ENCODE measurements at regions of chr16 and their contacts with region 1.

Region 1: DNA sequence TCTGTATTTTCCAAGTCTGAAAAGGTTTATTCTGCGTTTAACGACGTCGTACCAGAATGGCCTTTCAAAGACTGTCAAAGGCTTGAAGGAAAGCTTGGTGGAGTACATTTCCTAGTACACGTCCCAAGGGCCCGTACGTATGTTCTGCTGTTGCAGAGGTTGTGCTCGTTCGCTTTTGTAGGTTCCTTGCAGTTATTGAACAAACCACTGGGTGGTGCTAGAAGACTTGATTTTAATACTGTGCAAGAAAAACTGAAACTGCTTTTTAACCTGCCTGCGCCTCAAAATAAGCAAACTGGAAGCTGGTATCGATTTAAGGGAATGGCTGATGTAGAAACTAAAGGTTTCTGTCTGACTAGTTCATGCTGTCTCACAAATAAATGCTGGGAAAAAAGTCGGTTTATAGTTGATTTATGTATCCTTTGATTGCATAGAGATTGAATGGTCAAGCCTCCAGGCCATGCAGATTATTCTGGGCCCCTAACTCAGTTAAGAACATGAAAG is 54.6 kb downstream of the USP10 start:
- DNase-seq: peak; percentile 84
- H3K4me3 ChIP-seq: no peak overlapping the region
- H3K27ac ChIP-seq: peak overlapping the region; percentile 23
- H3K4me1 ChIP-seq: peaks cover 7% of the 10 kb centered on the region
- H3K27me3 ChIP-seq: no peaks in the 10 kb centered on the region
- CTCF ChIP-seq: peak; percentile 62

Region 2: DNA sequence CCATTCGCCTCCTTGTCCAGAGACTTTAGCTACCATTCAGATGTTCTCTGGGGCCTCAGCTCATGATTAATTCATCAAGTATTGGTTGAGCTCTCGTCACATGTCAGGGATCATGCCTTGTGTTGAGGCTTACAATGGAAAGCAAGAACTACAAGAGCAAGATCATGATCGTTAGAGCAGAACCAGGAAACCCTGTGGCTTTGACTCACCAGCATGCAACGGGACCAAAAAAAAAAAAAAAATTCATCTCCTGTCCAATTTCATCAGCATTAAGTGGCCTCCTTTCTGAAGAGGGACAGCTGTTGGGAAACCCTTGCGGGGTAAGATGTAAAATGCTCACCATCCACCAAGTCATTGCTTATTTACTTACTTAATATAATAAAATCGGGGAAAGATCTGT is 66.7 kb before region 1 on chr16:
- intact Hi-C with region 1: no loop called
- DNase-seq: no peak
- H3K4me3 ChIP-seq: no peak overlapping the region
- H3K27ac ChIP-seq: no peak overlapping the region
- H3K4me1 ChIP-seq: no peaks in the 10 kb centered on the region
- H3K27me3 ChIP-seq: no peaks in the 10 kb centered on the region
- CTCF ChIP-seq: no peak

Region 3: GRCh38 chr16:84806256-84806889 is 52.0 kb after region 1 on chr16:
- intact Hi-C with region 1: no loop called
- DNase-seq: no peak
- H3K4me3 ChIP-seq: no peak overlapping the region
- H3K27ac ChIP-seq: peak overlapping the region; percentile 44
- H3K4me1 ChIP-seq: no peaks in the 10 kb centered on the region
- H3K27me3 ChIP-seq: no peaks in the 10 kb centered on the region
- CTCF ChIP-seq: no peak

Region 4: DNA sequence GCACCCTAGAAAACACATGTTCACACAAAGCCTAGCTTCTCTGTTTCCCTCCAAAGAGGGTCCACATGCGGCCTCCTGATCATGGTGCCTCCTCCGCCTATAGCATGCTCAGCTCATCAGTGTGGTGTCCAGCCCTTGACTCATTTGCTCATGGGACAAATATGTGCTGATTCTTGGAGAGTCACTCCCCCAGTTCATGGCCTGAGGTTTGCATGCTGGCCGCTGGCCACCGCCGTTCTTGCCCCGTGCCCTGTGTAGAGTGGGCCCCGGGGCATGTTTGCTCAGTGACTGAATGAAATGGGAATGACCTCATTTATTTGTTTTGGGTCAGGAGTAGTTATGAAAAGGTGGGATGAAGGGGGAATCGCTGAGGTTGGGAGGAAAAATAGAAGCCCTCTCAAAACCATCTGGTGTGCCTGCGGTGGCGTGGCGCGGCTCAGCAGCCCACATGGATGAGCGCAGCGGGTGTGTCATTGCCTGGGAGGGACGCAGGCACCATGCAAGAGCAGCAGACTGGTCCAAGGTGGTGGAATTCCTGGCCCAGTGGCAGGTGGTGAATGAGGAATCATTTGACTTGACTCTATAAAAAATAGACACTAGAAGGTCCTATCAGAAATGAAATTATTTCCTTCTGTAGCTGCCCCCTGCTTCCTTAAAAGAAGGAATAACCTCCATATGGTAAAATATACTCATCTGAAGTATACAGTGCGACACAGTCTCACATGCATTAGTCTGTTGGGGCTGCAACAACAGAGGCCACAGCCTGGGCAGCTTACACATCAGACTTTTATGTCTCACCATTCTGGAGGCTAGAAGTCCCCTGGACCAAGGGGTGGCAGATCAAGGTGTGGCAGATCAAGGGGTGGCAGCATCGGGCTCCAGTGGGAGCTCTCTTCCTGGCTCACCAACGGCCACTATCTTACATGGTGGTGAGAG is 97.1 kb after region 1 on chr16:
- intact Hi-C with region 1: no loop called
- DNase-seq: no peak
- H3K4me3 ChIP-seq: no peak overlapping the region
- H3K27ac ChIP-seq: no peak overlapping the region
- H3K4me1 ChIP-seq: no peaks in the 10 kb centered on the region
- H3K27me3 ChIP-seq: no peaks in the 10 kb centered on the region
- CTCF ChIP-seq: no peak

Region 5: DNA sequence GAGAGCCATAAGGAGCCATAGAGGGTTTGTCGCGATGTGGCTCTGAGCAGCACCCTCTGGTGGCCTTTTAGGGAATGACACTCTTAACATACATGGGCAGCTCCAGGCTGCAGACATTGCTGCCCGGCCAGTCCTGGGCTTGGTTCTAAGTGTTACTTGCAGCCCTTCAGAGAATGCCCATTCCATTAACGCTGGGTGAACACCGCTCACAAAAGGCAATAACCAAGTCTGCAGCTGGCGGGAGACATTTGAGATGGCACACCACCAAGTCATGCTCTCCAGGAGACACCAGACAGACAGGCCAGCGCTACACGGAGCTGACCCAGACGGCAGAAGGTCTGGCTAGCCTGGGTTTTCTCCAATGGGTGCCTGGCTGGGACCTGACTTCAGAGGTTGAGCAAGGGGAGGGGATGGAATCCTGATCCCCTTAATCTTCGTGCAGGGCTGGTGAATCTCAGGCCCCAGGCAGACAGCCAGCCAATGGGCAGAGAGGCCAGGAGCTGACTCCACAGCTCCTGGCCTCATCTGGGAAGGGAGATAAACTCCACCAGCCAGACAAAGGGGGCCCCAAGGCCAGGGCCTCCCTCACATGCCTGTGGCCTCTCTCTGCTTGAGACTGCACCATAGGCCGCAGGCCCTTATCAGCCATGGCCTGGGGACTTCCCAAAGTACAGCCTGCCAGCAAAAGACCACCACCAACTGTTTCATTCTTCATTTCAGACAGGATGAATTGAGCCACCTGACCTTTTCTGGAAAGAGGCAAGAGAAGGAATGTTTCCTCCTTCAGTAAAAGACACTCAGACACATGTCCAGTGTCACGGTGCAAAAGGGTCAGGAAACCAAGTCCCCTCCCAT is 198.2 kb after region 1 on chr16:
- intact Hi-C with region 1: loop called (anchors 5 kb)
- DNase-seq: peak; percentile 87
- H3K4me3 ChIP-seq: no peak overlapping the region
- H3K27ac ChIP-seq: peak overlapping the region; percentile 13
- H3K4me1 ChIP-seq: no peaks in the 10 kb centered on the region
- H3K27me3 ChIP-seq: no peaks in the 10 kb centered on the region
- CTCF ChIP-seq: peak; percentile 87